ENCODE measurements at regions of chr2 and their contacts with region 1.

Region 1: GRCh38 chr2:146108993-146109392 is 1589.1 kb upstream of the ZEB2 start:
- DNase-seq: no peak
- H3K4me3 Mint-ChIP-seq: no peak overlapping the region
- H3K27ac Mint-ChIP-seq: no peak overlapping the region
- H3K4me1 Mint-ChIP-seq: no peaks in the 10 kb centered on the region
- H3K27me3 Mint-ChIP-seq: no peaks in the 10 kb centered on the region

Region 2: GRCh38 chr2:146079216-146079615 is 29.8 kb before region 1 on chr2:
- CTCF ChIA-PET with region 1: no interaction called
- POLR2A ChIA-PET with region 1: no interaction called
- intact Hi-C with region 1: no loop called
- DNase-seq: no peak
- H3K4me3 Mint-ChIP-seq: no peak overlapping the region
- H3K27ac Mint-ChIP-seq: no peak overlapping the region
- H3K4me1 Mint-ChIP-seq: no peaks in the 10 kb centered on the region
- H3K27me3 Mint-ChIP-seq: no peaks in the 10 kb centered on the region

Region 3: DNA sequence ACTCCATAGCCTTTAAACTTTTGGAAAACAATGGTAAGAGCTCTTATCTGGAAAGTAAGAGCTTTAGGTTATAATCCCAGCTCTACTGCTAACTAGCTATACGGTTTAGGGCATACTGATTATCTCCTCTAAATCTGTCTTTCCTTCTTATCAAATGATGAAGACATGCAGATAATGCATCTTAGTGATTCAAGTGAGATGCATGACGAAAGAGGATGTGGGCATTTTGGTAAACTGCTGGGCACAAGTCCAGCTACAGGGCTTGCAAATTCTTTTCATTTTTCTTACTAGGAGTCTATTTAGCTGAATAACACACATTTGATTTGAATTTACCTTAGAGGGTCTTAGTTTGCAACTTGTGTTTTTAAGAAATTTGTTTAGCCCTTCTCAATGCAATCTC is 15.7 kb after region 1 on chr2:
- CTCF ChIA-PET with region 1: no interaction called
- POLR2A ChIA-PET with region 1: no interaction called
- intact Hi-C with region 1: loop called (anchors 1 kb)
- DNase-seq: no peak
- H3K4me3 Mint-ChIP-seq: no peak overlapping the region
- H3K27ac Mint-ChIP-seq: no peak overlapping the region
- H3K4me1 Mint-ChIP-seq: no peaks in the 10 kb centered on the region
- H3K27me3 Mint-ChIP-seq: no peaks in the 10 kb centered on the region

Region 4: DNA sequence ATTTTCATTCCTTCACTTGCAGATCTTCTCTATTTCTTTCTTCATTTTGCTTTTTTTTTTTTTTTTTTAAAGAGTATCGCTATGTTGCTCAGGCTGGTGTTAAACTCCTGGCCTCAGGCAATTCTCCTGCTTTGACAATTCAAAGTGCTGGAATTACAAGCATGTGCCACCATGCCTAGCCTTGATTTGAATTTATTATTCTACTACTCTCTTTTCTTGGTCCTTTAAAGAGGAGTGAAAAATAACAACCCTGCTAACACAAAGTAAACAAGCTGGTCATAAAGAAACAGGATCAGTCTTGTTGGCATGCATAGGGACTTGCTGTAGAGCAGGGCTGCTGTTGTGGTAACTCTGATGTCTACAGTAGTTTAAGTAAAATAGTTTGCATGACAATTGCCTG is 26.3 kb after region 1 on chr2:
- CTCF ChIA-PET with region 1: no interaction called
- POLR2A ChIA-PET with region 1: no interaction called
- intact Hi-C with region 1: no loop called
- DNase-seq: no peak
- H3K4me3 Mint-ChIP-seq: no peak overlapping the region
- H3K27ac Mint-ChIP-seq: no peak overlapping the region
- H3K4me1 Mint-ChIP-seq: no peaks in the 10 kb centered on the region
- H3K27me3 Mint-ChIP-seq: no peaks in the 10 kb centered on the region